ENCODE measurements at regions of chr2 and their contacts with region 1.

Region 1: GRCh38 chr2:117835990-117836760 is 21.7 kb downstream of the DDX18 start:
- DNase-seq: peak; percentile 90
- ATAC-seq: peak; percentile 97

Region 2: DNA sequence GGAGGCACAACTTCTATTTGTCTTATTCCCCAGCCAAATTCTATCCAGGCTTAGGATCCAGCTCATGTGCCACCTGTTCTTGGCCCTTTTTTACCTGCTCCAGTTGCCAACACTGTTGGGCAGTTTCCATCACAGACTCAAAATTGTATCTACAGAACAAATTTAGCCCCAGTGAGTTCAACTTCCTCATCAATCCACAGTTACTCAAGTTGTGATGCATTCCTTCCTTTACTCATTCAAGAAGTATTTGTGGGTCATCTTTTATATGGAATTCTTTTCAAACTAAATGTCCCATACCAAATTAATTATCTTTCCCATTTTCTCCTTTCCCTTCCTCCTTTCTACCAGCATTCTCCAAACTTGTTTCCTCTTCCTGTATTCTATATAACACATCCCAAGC is 34.3 kb before region 1 on chr2:
- intact Hi-C with region 1: no loop called
- DNase-seq: no peak
- ATAC-seq: no peak

Region 3: DNA sequence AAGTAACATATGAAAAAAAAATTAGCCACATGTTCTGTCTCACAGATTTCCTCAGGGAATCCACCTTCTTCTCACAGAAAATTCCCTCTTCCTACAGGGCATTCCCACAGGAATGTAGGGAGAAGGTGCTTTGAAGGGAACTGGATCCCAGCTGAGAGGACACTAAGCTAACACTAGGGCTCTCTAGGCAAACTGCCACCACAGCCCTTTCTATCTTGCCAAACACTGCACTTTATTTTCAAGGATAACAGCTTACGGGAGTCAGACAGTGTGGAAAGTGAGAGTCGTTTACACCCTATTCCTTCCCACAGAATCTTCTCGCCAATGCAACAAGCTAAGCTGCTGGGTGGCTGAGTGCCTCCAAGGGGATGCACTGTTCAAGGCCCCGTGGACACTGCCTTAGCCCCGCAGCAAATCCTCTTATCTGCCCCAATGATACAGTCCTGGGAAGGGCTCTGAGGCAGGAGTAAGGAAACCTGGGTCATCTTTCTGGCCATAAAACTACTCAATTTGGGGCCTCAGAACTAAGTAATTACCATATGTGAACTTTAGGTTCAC is 100.8 kb after region 1 on chr2:
- intact Hi-C with region 1: loop called in 1 of 2 experiments (anchors 10 kb)
- DNase-seq: no peak
- ATAC-seq: peak; percentile 79 to 86

Region 4: DNA sequence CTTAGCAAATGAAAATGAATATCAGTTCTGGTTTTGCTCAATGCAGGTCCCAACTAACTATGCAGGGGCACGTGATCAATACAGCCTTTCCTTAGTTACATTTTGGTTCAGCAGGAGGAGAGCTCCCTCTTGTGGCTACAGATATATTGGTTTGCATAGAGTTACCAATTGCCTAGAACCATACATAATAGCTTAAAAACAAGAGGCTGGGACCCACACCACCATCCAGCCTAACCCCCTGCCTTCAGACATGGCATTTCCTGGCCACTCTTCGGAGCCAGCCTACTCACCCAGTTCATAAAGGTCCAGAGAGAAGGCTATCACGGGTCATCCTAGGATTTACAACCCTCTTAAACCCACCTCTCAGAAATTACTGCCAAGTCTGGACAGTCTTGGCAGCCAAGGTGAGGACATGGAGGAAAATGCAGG is 167.2 kb after region 1 on chr2:
- intact Hi-C with region 1: loop called in 1 of 2 experiments (anchors 5 kb)
- DNase-seq: peak; percentile 29
- ATAC-seq: peak; percentile 89 to 92

Measured in left cardiac atrium (tissue), 4 donors.